SK-N-SH (cell line): ENCODE measurements at regions of chr1 and their contacts with region 1.

Region 1: DNA sequence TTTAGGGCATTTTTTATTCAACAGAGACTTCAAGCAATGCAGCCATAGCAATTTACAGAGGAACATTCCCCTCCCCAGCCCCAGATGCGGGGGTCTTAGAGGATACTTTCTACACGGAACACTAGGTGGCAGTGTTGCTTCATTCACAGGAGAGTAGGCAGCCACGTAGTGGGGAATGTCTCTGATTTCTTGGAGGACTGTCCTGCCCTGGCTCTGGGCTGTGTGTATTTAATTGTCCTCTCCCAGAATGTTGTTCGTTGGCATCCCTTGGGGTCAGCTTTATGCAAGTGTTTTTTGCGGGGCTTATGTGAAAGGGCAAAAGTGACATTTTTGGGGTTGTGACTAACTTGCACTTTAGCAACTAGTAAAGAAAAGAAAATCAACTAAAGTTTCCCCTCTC is 96.9 kb downstream of the PAPPA2 start:
- DNase-seq: peak; percentile 77
- H3K4me3 ChIP-seq: no peak overlapping the region; a peak in 1 of 4 replicates
- H3K27ac ChIP-seq: no peak overlapping the region
- H3K4me1 ChIP-seq: no peaks in the 10 kb centered on the region
- H3K27me3 ChIP-seq: no peaks in the 10 kb centered on the region
- CTCF ChIP-seq: peak; percentile 80
- EP300 ChIP-seq: no peak
- RAD21 ChIP-seq: peak; percentile 98

Region 2: DNA sequence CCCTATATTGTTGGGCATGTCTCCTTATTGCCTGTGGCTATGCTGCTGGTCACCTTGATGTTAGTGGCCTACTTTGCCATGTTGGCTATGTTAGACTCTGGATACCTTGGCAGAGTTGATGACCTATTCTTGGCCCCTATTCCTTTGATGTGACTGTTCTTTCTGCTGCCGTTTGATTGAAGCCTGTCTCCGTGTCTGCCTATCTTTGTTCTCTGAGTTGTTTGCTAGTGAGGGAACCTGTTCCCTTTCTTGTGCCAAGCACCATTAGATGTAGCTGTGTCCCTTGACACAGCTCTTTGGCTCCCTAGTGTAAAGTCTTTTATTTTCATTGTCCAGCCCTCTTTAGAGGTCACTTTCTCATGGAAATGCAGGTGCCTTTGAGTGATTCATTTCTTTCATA is 125.6 kb before region 1 on chr1:
- CTCF ChIA-PET with region 1: no interaction called
- POLR2A ChIA-PET with region 1: no interaction called
- DNase-seq: no peak
- H3K4me3 ChIP-seq: no peak overlapping the region
- H3K27ac ChIP-seq: no peak overlapping the region
- H3K4me1 ChIP-seq: no peaks in the 10 kb centered on the region
- H3K27me3 ChIP-seq: no peaks in the 10 kb centered on the region
- CTCF ChIP-seq: no peak
- EP300 ChIP-seq: no peak
- RAD21 ChIP-seq: no peak

Region 3: DNA sequence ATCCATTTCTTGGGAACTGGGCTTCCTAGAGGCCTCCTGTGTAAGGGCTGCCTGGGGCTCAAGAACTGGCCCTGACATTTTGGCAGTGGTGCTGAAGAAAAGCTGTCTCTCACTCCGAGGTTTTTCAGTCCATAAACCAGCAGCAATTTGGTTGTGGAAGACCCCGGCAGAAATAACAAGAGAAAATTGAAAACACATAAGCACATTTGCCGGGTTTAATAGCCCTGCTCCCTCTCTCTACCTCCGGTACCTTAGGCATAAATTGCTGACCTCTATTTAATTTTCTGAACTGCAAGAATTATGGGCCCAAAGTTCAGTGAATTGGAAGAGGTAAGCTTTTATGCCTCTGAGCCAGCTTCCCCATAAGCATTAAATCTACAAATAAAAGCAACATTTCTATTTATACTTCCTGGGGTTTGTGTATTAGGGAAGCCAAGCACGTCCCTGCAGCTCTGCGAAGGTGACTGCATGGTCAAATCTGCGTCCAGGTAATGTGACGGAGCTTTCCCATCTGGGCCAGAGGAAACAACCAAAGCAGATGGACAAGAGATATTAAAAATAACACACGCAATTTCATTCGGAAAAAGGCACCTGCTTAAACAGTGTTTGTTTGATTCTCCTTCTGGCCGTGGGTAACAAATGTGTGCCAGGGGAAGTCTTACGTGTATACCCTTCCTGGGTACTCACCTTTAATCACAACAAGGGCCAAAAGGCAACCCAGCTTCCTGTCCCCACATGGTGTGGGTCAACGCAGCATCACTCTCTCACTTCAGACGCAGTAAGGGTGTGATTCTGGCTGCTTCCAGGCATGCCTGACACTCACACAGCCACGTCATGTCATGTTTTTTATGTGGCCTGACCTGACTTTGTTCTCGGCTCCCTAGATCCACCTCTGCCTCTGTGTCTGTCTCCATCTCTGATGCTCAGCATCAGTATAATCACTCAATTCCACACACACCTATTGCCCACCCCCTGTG is 27.7 kb before region 1 on chr1:
- CTCF ChIA-PET with region 1: interaction called, 14 read pairs
- POLR2A ChIA-PET with region 1: no interaction called
- DNase-seq: no peak
- H3K4me3 ChIP-seq: no peak overlapping the region
- H3K27ac ChIP-seq: no peak overlapping the region
- H3K4me1 ChIP-seq: no peaks in the 10 kb centered on the region
- H3K27me3 ChIP-seq: no peaks in the 10 kb centered on the region
- CTCF ChIP-seq: no peak
- EP300 ChIP-seq: no peak
- RAD21 ChIP-seq: no peak

Region 4: DNA sequence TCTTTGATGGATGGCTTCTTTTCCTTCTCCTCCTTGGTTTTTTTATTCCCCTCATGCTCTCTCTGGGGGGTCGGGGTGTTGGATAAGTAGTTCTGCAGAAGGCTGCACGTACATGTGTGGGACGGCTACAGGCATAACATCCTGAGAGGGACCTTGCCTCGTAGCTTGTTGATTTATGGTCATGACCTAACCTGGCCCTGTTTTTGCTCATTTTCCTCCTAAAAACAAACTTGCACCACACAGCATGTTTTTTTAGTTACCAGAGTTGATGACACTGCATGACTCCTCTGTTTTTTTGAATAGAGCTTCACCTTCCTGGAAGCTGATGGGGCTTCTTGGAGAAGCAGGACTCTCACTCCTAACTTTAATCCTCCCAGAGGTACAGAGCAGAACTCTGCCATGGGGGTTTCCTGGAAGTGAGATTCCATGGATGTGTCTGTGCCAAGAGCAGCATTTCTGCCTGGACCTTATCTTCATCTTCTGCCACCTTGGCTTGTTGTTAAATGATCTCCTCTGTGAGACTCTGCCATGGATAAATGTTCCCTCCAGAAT is 17.8 kb after region 1 on chr1:
- CTCF ChIA-PET with region 1: interaction called, 17 read pairs
- POLR2A ChIA-PET with region 1: no interaction called
- DNase-seq: no peak
- H3K4me3 ChIP-seq: no peak overlapping the region
- H3K27ac ChIP-seq: no peak overlapping the region
- H3K4me1 ChIP-seq: peaks cover 0 to 2% of the 10 kb centered on the region in 2 experiments; a peak in 1 of 4 replicates
- H3K27me3 ChIP-seq: no peaks in the 10 kb centered on the region
- CTCF ChIP-seq: no peak
- EP300 ChIP-seq: no peak
- RAD21 ChIP-seq: no peak

Region 5: DNA sequence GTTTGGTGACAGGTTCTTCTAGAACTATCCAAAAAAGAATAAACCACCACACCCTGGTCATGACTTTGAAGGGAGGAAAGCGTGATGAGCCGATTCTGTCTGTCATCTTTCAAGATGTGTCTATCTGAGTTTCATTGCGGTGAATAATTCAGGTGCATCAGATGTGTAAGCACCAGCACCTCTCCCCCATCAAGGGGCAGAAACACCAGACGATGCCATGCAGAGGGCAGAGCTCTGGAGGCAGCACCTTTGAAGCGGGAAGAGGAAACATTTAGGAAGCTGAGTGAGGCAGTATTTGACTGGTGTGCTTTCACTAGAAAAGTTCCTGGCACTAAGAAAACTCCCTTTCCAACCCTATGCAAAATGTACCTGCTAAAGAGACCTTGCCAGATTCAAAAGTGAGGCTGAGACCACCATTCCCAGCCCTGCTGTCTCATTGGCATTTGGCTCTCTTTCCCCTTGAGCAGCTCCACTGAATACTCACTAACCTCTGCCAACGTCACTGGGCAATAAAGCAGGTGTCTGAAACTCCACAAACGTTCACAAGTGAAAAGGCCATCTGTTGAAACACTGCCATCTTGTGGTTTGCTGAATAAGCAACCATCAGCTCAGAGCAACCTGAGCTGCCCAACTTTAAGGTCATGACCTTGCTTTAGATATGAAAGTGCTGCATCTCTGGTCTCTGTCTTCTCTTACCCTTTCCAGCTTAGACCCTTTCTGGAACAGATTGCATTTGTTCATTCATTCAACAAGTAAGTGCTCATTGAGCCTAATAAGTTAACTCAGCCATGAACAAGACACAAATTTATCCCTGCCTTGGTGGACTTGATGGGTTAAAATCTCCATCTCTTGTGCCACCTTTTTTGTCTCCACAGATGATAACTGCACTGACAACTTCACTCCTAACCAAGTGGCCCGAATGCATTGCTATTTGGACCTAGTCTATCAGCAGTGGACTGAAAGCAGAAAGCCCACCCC is 131.7 kb after region 1 on chr1:
- CTCF ChIA-PET with region 1: interaction called, 109 read pairs
- POLR2A ChIA-PET with region 1: no interaction called
- DNase-seq: peak; percentile 35
- H3K4me3 ChIP-seq: no peak overlapping the region
- H3K27ac ChIP-seq: peak overlapping the region in 1 of 2 experiments; percentile 43; a peak in 2 of 4 replicates
- H3K4me1 ChIP-seq: peaks cover 0 to 23% of the 10 kb centered on the region in 2 experiments; a peak in 1 of 4 replicates
- H3K27me3 ChIP-seq: no peaks in the 10 kb centered on the region
- CTCF ChIP-seq: peak; percentile 70
- EP300 ChIP-seq: no peak
- RAD21 ChIP-seq: peak; percentile 80

Region 6: GRCh38 chr1:176843352-176844297 is 283.7 kb after region 1 on chr1:
- CTCF ChIA-PET with region 1: interaction called, 147 read pairs
- POLR2A ChIA-PET with region 1: no interaction called
- DNase-seq: peak; percentile 37
- H3K4me3 ChIP-seq: no peak overlapping the region; a peak in 1 of 4 replicates
- H3K27ac ChIP-seq: no peak overlapping the region
- H3K4me1 ChIP-seq: peaks cover 0 to 10% of the 10 kb centered on the region in 2 experiments; a peak in 2 of 4 replicates
- H3K27me3 ChIP-seq: no peaks in the 10 kb centered on the region
- CTCF ChIP-seq: peak; percentile 54
- EP300 ChIP-seq: no peak
- RAD21 ChIP-seq: peak; percentile 97